Adrenal gland (tissue), 19 donors: ENCODE measurements at regions of chr13 and their contacts with region 1.

Region 1: DNA sequence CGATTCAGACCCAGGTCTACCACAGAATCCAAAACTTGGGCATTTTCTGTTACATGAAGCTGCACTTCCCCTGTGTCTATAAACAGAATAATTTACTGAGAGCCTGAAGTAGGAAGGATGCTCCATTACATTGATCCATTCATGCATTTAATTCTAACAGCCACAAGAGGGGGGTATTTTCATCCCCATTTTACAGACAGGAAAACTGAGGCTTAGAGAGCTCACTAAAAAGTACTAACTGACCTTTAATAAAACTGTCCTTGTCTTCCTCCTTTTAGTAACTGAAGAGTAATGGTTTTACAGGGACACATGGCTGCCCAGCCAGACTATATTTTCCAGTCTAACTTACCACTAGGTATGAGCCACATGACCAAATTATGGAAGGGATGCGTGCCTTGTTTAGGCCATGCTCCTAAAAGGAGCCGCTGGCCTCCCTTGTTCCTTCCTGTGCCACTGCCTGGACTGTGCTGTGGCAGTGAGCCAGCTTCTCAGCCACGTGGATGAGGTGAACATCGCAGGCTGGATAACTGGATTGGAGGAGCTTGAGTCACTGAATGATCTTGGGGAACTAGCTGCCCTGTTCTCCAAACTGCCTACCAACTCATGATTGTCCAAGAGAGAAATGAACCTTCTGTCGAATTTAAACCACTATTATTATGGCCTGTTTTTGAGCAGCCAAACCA is 108.3 kb downstream of the DOCK9 start:
- DNase-seq: peak; percentile 28 to 76 (median 68)
- H3K4me3 ChIP-seq: no peak overlapping the region
- H3K27ac ChIP-seq: no peak overlapping the region
- H3K4me1 ChIP-seq: no peaks in the 10 kb centered on the region
- H3K27me3 ChIP-seq: no peaks in the 10 kb centered on the region
- CTCF ChIP-seq: peak in 1 of 6 experiments; percentile 18
- POLR2A ChIP-seq: no peak

Region 2: DNA sequence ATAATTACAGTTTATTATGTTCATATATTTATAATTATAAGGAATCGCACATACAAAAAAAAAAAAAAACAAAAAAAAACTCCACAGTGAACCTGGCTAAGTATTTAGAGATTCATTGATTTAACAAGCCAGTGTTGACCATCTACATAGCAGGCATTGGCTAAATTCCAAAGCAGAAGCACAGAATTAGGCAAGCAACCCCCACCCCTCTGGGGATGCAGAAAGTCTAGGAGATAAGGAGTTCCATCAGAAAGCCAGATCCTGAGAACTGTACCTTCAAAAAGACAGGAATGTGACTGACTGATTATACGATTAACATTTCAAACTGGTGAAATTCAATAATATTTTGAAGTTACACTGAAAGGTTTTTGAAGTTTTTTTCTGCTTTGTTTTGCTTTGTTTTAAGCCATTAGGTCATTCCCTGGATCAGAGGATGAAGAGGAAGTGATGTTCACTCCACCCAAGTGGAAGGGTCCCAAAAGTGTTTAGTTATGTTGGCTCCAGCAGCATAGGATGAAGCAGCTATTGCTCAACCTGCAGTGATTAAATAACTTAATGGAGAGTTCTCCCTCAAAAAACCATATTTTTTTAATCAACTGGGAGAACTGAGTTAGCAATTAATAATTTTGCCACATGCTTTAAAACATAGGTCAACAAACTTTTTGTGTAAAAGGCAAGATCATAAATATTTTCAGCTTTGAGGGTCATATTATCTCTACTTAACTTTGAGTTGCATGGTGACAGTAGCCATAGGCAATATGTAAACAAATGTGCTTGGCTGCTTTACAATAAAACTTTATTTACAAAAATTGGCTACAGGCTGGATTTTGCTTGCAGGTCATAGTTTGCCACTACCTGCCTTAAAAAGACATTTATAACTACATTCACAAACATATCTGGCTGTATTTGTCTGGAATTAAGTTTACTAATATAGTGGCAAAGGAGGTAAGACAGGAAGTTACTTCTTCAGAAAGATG is 58.7 kb after region 1 on chr13:
- intact Hi-C with region 1: loop called in 1 of 2 experiments (anchors 10 kb)
- DNase-seq: no peak
- H3K4me3 ChIP-seq: no peak overlapping the region
- H3K27ac ChIP-seq: no peak overlapping the region
- H3K4me1 ChIP-seq: peaks cover 0 to 2% of the 10 kb centered on the region in 2 donors
- H3K27me3 ChIP-seq: no peaks in the 10 kb centered on the region
- CTCF ChIP-seq: no peak
- POLR2A ChIP-seq: no peak